ENCODE measurements at regions of chr18 and their contacts with region 1.

Region 1: GRCh38 chr18:31101183-31102024 is 817 bp downstream of the DSC2 start:
- DNase-seq: peak; percentile 88

Region 2: DNA sequence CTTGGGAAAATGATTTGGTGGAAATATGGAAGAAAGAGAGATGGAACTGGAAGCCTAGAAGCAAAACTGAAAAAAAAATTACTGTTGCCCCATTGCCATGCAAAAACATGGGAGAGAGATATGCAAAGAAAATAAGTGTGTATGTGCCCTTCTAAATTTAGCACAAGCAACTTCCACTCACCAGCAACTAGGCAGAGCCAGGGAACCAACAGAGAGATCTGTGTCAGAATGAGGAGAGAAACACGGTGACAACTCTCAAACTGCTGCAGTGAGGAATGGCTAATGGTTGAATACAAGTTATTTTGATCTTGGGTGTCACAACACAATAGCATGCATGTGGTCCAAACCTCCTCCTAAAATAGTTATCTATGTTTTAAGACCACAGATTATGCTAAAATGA is 10.1 kb before region 1 on chr18:
- intact Hi-C with region 1: loop called (anchors 1 kb)
- DNase-seq: no peak

Region 3: GRCh38 chr18:31156821-31157777 is 55.7 kb after region 1 on chr18:
- intact Hi-C with region 1: loop called (anchors 10 kb)
- DNase-seq: no peak

Region 4: GRCh38 chr18:31185186-31185950 is 84.0 kb after region 1 on chr18:
- intact Hi-C with region 1: no loop called
- DNase-seq: no peak

Region 5: DNA sequence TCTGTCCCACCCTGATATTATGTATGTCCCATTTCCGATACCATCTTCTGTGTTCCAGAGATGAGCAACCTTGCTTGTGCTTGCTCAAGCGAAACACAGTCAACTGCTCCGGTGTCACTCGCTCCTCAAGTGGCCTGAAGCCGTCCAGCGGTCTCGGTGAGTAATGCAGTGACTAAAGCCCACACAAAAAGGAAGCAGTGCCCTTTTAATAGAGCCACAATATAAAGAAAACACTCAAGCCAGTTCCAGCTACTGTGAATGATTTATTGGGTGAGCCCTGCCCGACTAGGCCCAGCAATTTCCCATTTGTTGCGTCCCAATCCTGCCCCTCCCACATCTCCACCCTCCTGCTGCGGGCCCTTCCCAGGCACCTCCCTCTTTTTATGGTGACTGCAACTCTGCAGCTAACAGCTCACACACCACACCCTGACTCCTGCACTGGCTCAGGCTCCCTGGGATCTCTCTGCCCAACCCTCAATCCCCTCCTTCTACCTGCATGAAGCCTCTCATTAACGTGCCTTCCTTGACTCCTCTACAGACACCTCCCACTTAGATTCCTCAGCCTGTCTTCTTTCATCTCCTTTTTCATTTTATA is 105.5 kb after region 1 on chr18:
- intact Hi-C with region 1: loop called (anchors 10 kb)
- DNase-seq: peak; percentile 80

Region 6: GRCh38 chr18:31225668-31226067 is 124.3 kb after region 1 on chr18:
- intact Hi-C with region 1: loop called (anchors 1 kb)
- DNase-seq: peak; percentile 81

Region 7: DNA sequence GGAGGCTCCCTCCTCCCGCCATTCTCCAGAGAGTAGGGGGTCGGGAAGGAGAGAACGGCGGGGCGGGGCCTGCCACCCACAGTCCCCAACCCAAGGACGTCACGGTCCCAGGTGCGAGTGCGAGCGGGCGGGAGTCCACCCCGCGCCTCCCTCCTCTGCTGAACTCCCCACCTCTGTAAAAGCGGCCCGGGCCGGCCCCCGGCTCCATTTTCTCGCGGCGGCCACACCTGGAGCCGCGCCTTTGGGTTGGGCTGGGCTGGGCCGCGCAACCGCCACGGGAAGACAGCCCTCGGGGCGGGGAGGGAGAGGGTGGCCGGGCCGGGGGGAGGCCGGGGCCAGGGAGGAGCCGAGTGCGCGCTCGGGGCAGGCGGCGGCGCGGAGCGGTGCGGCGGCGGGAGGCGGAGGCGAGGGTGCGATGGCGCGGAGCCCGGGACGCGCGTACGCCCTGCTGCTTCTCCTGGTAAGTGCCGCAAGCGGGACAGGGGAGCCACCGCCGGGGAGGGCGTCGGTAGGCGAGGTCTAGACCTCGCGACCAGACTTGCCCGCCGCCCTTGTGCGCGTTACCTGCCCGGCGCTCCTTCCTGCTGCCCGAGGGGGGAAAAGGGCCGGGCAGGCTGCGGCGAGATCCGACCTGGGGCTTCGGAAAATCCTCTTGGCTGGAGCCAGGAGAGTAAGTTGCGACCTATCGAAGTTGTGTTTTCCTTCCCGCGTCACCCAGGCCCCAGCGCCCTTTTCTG is 396.6 kb after region 1 on chr18 and contains the start of gene DSG2:
- intact Hi-C with region 1: loop called (anchors 5 kb)
- DNase-seq: peak; percentile 85
- total RNA-seq, gene DSG2: 34.4 TPM